B cell (primary cell): ENCODE measurements at regions of chrX and their contacts with region 1.

Region 1: GRCh38 chrX:123960042-123960611 is 1.4 kb upstream of the STAG2 start:
- DNase-seq: peak; percentile 93
- ATAC-seq: peak; percentile 74
- H3K4me3 ChIP-seq: peak overlapping the region; percentile 71 to 93 (median 91)
- H3K4me3 Mint-ChIP-seq: peak overlapping the region; percentile 88
- H3K27ac ChIP-seq: peak overlapping the region; percentile 94 to 100
- H3K27ac Mint-ChIP-seq: peak overlapping the region; percentile 94
- H3K4me1 ChIP-seq: peaks cover 7 to 14% of the 10 kb centered on the region in 2 donors
- H3K4me1 Mint-ChIP-seq: peaks cover 18% of the 10 kb centered on the region
- H3K27me3 ChIP-seq: no peaks in the 10 kb centered on the region
- H3K27me3 Mint-ChIP-seq: no peaks in the 10 kb centered on the region
- CTCF ChIP-seq: peak; percentile 77

Region 2: DNA sequence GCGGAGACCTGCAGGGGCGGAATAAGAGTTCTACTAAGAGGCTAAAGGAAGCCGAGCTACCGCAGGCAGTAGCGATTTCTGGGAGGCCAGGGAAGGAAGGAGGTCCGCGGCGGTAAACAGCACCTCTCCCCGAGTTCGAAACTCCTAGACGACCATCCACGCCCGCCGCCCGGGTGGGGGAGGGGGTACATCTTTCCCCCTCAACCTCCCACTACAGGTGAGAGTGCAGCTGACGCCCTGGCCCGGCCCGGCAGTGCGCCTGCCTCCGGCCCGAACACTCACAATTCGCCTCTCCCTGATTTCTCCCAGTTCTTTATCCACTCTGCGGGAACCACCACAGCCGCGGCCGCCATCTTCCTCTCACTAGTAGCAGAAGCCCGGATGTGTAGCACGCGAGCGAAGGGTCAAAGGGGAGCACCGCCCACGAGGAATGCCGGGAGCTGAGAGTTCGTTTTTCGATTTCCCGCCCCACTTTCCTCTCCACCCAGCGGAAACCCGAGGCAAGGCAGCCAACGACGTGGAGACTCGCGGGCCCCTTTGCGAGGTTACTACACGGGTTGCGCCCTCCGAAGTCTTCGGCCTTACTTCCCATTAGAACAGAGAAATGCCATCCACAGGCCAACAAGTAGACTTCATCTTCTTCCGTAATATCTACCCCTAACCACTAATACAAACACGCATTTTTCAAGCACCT is 227.3 kb before region 1 on chrX and contains the start of gene THOC2:
- CTCF ChIA-PET with region 1: no interaction called
- POLR2A ChIA-PET with region 1: no interaction called
- intact Hi-C with region 1: loop called (anchors 5 kb)
- DNase-seq: peak; percentile 83
- ATAC-seq: peak; percentile 90
- H3K4me3 ChIP-seq: peak within 1 kb of the TSS; percentile 39 to 84 (median 82)
- H3K4me3 Mint-ChIP-seq: peak within 1 kb of the TSS; percentile 94
- H3K27ac ChIP-seq: peak within 1 kb of the TSS; percentile 49 to 76
- H3K27ac Mint-ChIP-seq: peak within 1 kb of the TSS; percentile 94
- H3K4me1 ChIP-seq: peaks cover 10 to 11% of the 10 kb centered on the region in 2 donors
- H3K4me1 Mint-ChIP-seq: peaks cover 37% of the 10 kb centered on the region
- H3K27me3 ChIP-seq: no peaks in the 10 kb centered on the region
- H3K27me3 Mint-ChIP-seq: no peaks in the 10 kb centered on the region
- CTCF ChIP-seq: no peak
- total RNA-seq, gene THOC2: 113 and 126 TPM in 2 replicates

Region 3: GRCh38 chrX:123878252-123878721 is 81.8 kb before region 1 on chrX:
- CTCF ChIA-PET with region 1: no interaction called
- POLR2A ChIA-PET with region 1: interaction called, 4 read pairs
- intact Hi-C with region 1: loop called (anchors 5 kb)
- DNase-seq: peak; percentile 40
- ATAC-seq: peak; percentile 63
- H3K4me3 ChIP-seq: peak overlapping the region in 2 of 5 experiments; percentile 31 to 41
- H3K4me3 Mint-ChIP-seq: peak overlapping the region; percentile 73
- H3K27ac ChIP-seq: peak overlapping the region; percentile 55 to 76
- H3K27ac Mint-ChIP-seq: peak overlapping the region; percentile 46
- H3K4me1 ChIP-seq: peaks cover 9 to 14% of the 10 kb centered on the region in 2 donors
- H3K4me1 Mint-ChIP-seq: peaks cover 30% of the 10 kb centered on the region
- H3K27me3 ChIP-seq: no peaks in the 10 kb centered on the region
- H3K27me3 Mint-ChIP-seq: no peaks in the 10 kb centered on the region
- CTCF ChIP-seq: no peak

Region 4: GRCh38 chrX:123976706-123977316 is 16.7 kb after region 1 on chrX:
- CTCF ChIA-PET with region 1: interaction called, 3 read pairs
- POLR2A ChIA-PET with region 1: interaction called, 5 read pairs
- intact Hi-C with region 1: loop called (anchors 2 kb)
- DNase-seq: no peak
- ATAC-seq: no peak
- H3K4me3 ChIP-seq: no peak overlapping the region
- H3K4me3 Mint-ChIP-seq: peak overlapping the region; percentile 50
- H3K27ac ChIP-seq: peak overlapping the region in 1 of 2 donors; percentile 49
- H3K27ac Mint-ChIP-seq: peak overlapping the region; percentile 46
- H3K4me1 ChIP-seq: peaks cover 28 to 32% of the 10 kb centered on the region in 2 donors
- H3K4me1 Mint-ChIP-seq: peaks cover 46% of the 10 kb centered on the region
- H3K27me3 ChIP-seq: no peaks in the 10 kb centered on the region
- H3K27me3 Mint-ChIP-seq: no peaks in the 10 kb centered on the region
- CTCF ChIP-seq: peak; percentile 22

Region 5: DNA sequence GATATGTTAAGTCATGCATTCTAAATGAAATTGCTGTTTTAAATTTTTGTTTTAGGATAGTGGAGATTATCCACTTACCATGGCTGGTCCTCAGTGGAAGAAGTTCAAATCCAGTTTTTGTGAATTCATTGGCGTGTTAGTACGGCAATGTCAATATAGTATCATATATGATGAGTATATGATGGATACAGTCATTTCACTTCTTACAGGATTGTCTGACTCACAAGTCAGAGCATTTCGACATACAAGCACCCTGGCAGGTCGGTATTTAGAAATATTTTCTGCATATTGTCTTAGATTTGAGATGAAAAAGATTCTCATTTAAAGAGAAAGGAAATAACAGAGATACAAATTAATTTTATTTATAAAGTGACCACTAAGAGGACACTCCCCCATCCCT is 85.0 kb after region 1 on chrX:
- CTCF ChIA-PET with region 1: no interaction called
- POLR2A ChIA-PET with region 1: interaction called, 4 read pairs
- intact Hi-C with region 1: loop called (anchors 5 kb)
- DNase-seq: no peak
- ATAC-seq: no peak
- H3K4me3 ChIP-seq: no peak overlapping the region
- H3K4me3 Mint-ChIP-seq: no peak overlapping the region
- H3K27ac ChIP-seq: no peak overlapping the region
- H3K27ac Mint-ChIP-seq: no peak overlapping the region
- H3K4me1 ChIP-seq: no peaks in the 10 kb centered on the region
- H3K4me1 Mint-ChIP-seq: no peaks in the 10 kb centered on the region
- H3K27me3 ChIP-seq: no peaks in the 10 kb centered on the region
- H3K27me3 Mint-ChIP-seq: no peaks in the 10 kb centered on the region
- CTCF ChIP-seq: no peak